CD14-positive monocyte (primary cell): ENCODE measurements at regions of chr1 and their contacts with region 1.

Region 1: DNA sequence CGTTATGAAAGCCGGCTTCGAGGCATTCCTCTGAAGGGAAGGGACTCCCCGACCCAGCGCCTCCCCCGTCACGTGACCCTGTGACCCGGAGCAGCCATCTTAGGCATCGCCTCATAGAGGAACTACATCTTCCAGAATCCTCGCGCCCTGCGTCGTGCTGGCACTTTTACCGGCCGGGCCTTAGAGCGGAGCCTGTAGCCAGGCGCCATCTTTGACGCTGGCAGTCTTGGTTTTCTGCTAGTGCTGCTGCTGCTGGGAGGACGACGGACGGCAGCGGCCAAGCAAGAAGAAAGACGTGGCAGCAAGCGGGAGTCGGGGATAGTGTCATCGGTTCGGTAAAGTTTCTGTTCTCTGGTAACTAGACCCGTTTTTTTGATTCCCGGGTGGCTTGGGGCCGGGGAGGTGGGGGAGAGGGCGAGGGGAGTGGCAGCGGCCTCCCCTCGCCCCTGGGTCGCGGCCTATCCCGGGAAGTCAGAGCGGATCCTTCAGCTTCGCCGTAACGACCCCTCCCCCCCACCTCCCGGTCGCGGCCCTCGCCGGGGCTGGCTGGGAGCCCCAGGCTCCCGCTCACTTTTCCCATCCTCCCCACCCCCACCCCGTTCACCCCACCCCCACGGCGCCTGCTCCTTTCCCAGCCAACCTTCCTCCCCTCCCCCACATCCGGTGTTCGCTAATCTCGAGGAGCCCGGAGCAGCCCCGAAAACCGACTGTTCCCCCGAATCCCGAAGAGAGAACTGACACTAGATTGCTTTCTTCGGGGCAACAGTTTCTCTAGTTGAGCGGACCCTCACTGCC is at the starts of genes ZBED6 and ZC3H11A:
- DNase-seq: peak; percentile 99 to 100 (median 100)
- H3K4me3 ChIP-seq: peak within 1 kb of the TSS; percentile 76 to 99 (median 99)
- H3K4me3 Mint-ChIP-seq: peak within 1 kb of the TSS; percentile 99 to 100
- H3K27ac ChIP-seq: peak within 1 kb of the TSS; percentile 90 to 91
- H3K27ac Mint-ChIP-seq: peak within 1 kb of the TSS; percentile 95 to 100 (median 99)
- H3K4me1 ChIP-seq: peaks cover 15 to 26% of the 10 kb centered on the region in 2 donors
- H3K4me1 Mint-ChIP-seq: peaks cover 36% of the 10 kb centered on the region
- H3K27me3 ChIP-seq: no peaks in the 10 kb centered on the region
- H3K27me3 Mint-ChIP-seq: peaks cover 0 to 2% (median 0%) of the 10 kb centered on the region in 3 donors
- CTCF ChIP-seq: no peak
- polyA plus RNA-seq, gene ZBED6: 0.56 to 2.2 (median 1.00) TPM
- polyA plus RNA-seq, gene ZC3H11A: 17.8 to 59.0 (median 23.2) TPM

Region 2: GRCh38 chr1:203744075-203744972 is 51.3 kb before region 1 on chr1:
- intact Hi-C with region 1: loop called in 1 of 2 experiments (anchors 10 kb)
- DNase-seq: peak in 2 of 3 donors; percentile 25 to 35
- H3K4me3 ChIP-seq: peak overlapping the region; percentile 13 to 64 (median 21)
- H3K4me3 Mint-ChIP-seq: peak overlapping the region; percentile 63 to 79
- H3K27ac ChIP-seq: peak overlapping the region; percentile 21 to 77
- H3K27ac Mint-ChIP-seq: peak overlapping the region; percentile 82 to 92 (median 86)
- H3K4me1 ChIP-seq: peaks cover 11 to 18% of the 10 kb centered on the region in 2 donors
- H3K4me1 Mint-ChIP-seq: peaks cover 23% of the 10 kb centered on the region
- H3K27me3 ChIP-seq: no peaks in the 10 kb centered on the region
- H3K27me3 Mint-ChIP-seq: peaks cover 0 to 5% (median 0%) of the 10 kb centered on the region in 3 donors
- CTCF ChIP-seq: no peak

Region 3: DNA sequence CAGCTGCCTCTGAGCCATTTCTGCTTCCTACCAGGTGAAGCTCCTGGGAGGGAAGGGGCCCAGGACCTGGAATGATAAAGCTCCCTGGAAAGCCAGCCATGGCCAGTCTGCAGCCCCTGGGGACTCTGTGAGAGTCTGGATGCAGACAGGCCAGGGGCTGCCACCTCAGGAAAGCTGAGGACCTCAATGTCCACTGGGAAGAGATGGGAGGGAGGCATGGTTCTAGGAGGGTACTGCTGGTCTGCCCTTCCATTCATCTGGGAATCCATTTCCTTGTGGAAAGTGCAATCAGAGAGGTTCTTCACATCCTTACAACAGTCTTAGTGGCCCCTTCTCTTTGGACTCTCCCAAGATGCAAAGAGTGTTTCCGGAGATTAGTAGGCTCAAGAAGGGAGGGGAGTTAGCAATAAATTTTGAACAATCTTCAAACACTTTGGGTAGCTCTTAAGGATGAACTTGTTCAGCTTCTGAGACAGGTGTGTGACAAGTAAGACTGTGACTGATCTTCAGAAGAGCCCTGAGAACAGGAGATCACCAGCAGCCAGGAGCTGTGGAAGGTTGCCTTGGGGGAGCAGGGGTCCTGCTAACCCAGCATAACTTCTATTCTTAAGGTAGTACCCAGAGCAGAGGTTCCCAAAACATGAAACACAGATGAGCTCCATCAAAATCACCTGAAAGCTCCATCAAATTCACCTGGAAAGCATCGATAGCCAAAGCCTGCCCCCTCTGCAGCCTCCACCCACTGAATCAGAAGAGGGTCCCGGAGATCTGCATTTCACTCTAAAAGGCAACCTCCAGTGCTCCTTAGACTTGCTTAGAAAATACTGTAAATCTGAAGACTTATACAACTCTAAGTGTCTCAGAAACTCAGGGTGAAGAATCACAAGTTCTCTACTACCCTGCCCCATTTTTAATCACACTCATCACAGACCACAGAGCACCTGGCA is 31.3 kb before region 1 on chr1:
- intact Hi-C with region 1: loop called in 1 of 2 experiments (anchors 5 kb)
- DNase-seq: no peak
- H3K4me3 ChIP-seq: no peak overlapping the region
- H3K4me3 Mint-ChIP-seq: no peak overlapping the region
- H3K27ac ChIP-seq: no peak overlapping the region
- H3K27ac Mint-ChIP-seq: peak overlapping the region in 1 of 7 donors; percentile 71
- H3K4me1 ChIP-seq: peaks cover 5 to 7% of the 10 kb centered on the region in 2 donors
- H3K4me1 Mint-ChIP-seq: peaks cover 24% of the 10 kb centered on the region
- H3K27me3 ChIP-seq: no peaks in the 10 kb centered on the region
- H3K27me3 Mint-ChIP-seq: peaks cover 0 to 1% (median 0%) of the 10 kb centered on the region in 3 donors
- CTCF ChIP-seq: no peak